ENCODE measurements at regions of chr19 and their contacts with region 1.

Region 1: DNA sequence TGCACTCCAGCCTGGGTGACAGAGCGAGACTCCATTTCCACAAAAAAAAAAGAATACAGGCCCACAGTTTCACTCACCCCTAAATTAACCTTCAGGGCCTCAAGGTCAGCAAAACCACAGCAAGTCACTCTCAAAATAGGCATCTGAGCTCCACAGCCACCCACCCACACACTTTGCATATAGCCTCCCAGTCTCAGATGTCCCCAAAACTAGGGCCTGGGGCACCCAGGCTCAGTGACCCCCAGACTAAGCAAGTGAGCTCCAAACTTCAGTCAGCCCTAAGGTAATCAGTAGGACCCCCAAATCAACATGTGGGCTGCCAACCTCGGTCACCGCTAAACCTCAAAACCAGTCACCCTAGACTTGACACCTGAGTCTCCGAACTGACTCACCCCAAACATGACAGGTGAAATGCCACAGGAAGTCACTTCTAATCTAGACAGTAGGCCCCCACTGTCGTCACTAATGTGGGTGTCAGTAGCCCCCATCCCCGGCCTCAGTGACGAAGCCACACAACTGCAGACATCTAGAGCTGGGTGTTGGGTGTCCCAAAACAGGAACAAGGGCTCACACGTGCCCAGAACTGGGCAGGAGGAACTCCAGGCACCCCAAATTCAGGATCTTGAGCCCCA is 13.9 kb downstream of the RABAC1 start:
- DNase-seq: peak; percentile 51 to 97 (median 92)
- ATAC-seq: peak; percentile 87 to 90
- H3K4me3 Mint-ChIP-seq: peak overlapping the region; percentile 27 to 80 (median 74)
- H3K27ac Mint-ChIP-seq: peak overlapping the region; percentile 97 to 99 (median 98)
- H3K4me1 Mint-ChIP-seq: peaks cover 38 to 74% (median 60%) of the 10 kb centered on the region in 4 donors
- H3K27me3 Mint-ChIP-seq: no peaks in the 10 kb centered on the region

Region 2: DNA sequence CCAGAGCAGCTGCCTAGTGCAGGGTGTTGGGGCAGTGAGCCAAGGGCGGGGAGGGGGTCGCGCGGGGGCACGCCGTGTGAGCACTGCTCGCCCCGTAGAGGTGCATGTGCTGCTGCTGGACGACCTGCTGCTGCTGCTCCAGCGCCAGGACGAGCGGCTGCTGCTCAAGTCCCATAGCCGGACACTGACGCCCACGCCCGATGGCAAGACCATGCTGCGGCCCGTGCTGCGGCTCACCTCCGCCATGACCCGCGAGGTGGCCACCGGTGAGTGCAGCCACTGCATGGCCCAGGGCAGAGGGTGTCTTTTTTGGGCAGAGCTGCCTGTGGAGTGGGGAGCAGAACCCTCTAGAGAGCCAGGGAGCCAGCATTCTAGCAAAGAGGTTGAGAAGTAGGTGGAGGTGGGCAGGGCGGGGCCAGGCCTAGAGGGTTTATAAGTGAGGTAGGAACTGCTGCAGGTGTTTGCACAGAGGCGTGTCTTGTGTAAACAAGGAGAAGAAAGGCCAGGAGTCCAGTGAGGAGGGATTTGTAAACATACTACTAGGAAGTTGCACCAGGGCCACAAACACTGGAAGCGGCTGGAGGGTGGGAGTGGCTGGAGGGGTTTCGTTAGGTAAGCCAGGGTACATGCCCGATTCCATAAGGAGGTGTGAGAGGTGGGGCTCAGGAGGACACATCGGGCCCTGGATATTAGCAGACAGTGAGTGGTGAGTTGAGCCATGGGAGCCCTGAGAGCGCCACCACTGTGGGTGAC is 41.0 kb before region 1 on chr19:
- POLR2A ChIA-PET with region 1: interaction called, 14 read pairs
- DNase-seq: no peak
- ATAC-seq: no peak
- H3K4me3 Mint-ChIP-seq: peak overlapping the region in 4 of 10 donors; percentile 5 to 39 (median 31)
- H3K27ac Mint-ChIP-seq: peak overlapping the region in 9 of 10 donors; percentile 57 to 85 (median 81)
- H3K4me1 Mint-ChIP-seq: peaks cover 23 to 70% (median 53%) of the 10 kb centered on the region in 4 donors
- H3K27me3 Mint-ChIP-seq: no peaks in the 10 kb centered on the region

Region 3: DNA sequence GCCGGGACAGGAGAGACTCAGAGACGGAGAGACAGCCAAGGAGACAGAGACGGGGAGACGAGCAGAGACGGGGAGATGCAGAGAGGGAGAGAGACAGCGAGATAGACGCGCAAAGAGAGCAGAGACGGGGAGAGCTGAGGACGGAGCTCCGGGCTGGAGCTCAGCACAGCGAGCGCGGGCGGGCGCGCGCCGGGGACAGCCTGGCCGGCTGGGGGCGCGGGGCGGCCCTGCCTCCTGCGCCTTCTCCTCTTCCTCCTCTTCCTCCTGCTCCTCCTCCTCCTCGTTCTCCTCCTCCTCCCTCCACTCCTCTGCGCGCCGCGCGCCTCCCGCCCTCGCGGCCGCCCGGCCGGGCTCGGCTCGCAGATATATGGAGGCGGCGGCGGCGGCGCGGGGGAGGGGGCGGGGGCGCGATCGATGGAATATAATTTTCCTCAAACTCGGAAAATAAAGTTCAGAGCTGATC is 17.0 kb before region 1 on chr19 and contains the start of gene ERFL:
- POLR2A ChIA-PET with region 1: interaction called, 21 read pairs
- DNase-seq: peak in 1 of 10 donors; percentile 34
- ATAC-seq: peak; percentile 37 to 47
- H3K4me3 Mint-ChIP-seq: peak within 1 kb of the TSS in 7 of 10 donors; percentile 86 to 97 (median 94)
- H3K27ac Mint-ChIP-seq: peak within 1 kb of the TSS in 9 of 10 donors; percentile 83 to 94 (median 91)
- H3K4me1 Mint-ChIP-seq: peaks cover 24 to 43% (median 37%) of the 10 kb centered on the region in 4 donors
- H3K27me3 Mint-ChIP-seq: peaks cover 0 to 5% (median 0%) of the 10 kb centered on the region in 5 donors
- polyA plus RNA-seq, gene ERFL: not detected

Region 4: GRCh38 chr19:41959056-41960053 is 14.1 kb after region 1 on chr19 and contains the start of gene RABAC1:
- POLR2A ChIA-PET with region 1: interaction called, 24 read pairs
- DNase-seq: peak; percentile 76 to 93 (median 85)
- ATAC-seq: peak; percentile 91 to 92
- H3K4me3 Mint-ChIP-seq: peak within 1 kb of the TSS; percentile 79 to 99 (median 97)
- H3K27ac Mint-ChIP-seq: peak within 1 kb of the TSS; percentile 64 to 96 (median 92)
- H3K4me1 Mint-ChIP-seq: peaks cover 16 to 22% (median 20%) of the 10 kb centered on the region in 4 donors
- H3K27me3 Mint-ChIP-seq: no peaks in the 10 kb centered on the region
- polyA plus RNA-seq, gene RABAC1: 201 to 288 (median 231) TPM

Measured in naive thymus-derived CD8-positive, alpha-beta T cell (primary cell).